ENCODE measurements at regions of chr14 and their contacts with region 1.

Region 1: DNA sequence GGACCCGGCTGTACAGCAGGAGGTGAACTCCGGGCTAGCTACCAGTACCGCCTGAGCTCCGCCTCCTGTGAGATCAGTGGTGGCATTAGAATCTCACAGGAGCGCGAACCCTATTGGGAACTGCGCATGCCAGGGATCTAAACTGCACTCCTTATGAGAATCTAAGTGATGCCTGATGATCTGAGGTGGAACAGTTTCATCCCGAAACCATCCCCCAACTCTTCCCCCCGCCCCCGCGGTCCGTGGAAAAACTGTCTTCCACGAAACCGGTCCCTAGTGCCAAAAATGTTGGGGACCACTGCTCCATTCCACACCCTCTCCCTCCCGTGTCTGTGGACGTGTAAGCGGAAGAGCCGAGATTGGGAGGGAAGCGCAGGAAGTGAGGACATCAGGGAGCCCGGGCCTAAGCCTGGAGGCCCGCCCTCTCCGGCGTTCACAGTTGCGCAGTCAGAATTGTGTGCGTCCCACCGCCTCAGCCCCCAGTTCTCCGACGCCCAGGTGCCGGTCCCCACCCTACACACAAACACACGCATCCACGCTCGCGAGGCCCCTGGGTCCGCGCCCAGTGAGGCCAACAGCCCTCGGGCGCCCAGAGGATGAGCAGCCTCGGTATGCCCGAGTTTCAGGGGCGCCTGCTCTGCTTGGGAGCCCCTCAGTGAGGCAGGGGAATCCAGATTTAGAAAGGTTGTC is 1.8 kb upstream of the RNASE4 start:
- DNase-seq: peak; percentile 81
- H3K4me3 Mint-ChIP-seq: no peak overlapping the region
- H3K27ac Mint-ChIP-seq: no peak overlapping the region
- H3K4me1 Mint-ChIP-seq: peaks cover 22% of the 10 kb centered on the region
- H3K27me3 Mint-ChIP-seq: no peaks in the 10 kb centered on the region

Region 2: DNA sequence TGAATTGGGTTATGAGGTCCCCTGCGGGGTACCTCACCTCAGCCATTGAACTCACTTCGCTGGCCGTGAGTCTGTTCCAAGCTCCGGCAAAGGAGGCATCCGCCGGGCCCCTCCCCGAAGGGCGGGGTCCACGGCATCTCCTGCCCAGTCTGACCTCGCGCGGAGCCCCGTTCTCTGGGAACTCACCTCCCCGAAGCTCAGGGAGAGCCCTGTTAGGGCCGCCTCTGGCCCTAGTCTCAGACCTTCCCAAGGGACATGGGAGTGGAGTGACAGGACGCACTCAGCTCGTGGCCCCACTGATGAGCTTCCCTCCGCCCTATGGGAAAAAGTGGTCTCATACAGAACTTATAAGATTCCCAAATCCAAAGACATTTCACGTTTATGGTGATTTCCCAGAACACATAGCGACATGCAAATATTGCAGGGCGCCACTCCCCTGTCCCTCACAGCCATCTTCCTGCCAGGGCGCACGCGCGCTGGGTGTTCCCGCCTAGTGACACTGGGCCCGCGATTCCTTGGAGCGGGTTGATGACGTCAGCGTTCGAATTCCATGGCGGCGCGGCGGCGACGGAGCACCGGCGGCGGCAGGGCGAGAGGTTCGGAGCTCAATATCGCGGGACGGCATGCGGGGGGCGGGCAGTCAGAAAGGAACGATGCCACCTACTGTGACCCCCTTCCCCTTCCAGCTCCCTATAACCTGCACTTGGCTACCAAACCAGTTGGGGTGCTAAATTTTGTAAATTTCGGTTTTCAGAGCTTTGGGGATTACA is 339.3 kb before region 1 on chr14 and contains the start of gene PARP2:
- CTCF ChIA-PET with region 1: interaction called, 3 read pairs
- intact Hi-C with region 1: loop called (anchors 1 kb)
- DNase-seq: peak; percentile 96
- H3K4me3 Mint-ChIP-seq: peak within 1 kb of the TSS; percentile 96
- H3K27ac Mint-ChIP-seq: peak within 1 kb of the TSS; percentile 95
- H3K4me1 Mint-ChIP-seq: peaks cover 19% of the 10 kb centered on the region
- H3K27me3 Mint-ChIP-seq: peaks cover 2% of the 10 kb centered on the region
- total RNA-seq, gene PARP2: 62.5 to 63.5 TPM

Region 3: GRCh38 chr14:20454516-20455354 is 227.8 kb before region 1 on chr14 and contains the starts of genes APEX1 and OSGEP:
- CTCF ChIA-PET with region 1: interaction called, 3 read pairs
- intact Hi-C with region 1: loop called (anchors 1 kb)
- DNase-seq: peak; percentile 99
- H3K4me3 Mint-ChIP-seq: peak within 1 kb of the TSS; percentile 52
- H3K27ac Mint-ChIP-seq: no peak within 1 kb of the TSS
- H3K4me1 Mint-ChIP-seq: peaks cover 31% of the 10 kb centered on the region
- H3K27me3 Mint-ChIP-seq: no peaks in the 10 kb centered on the region
- total RNA-seq, gene APEX1: 187 to 190 TPM
- total RNA-seq, gene OSGEP: 35.7 to 36.8 TPM

Region 4: GRCh38 chr14:20632682-20633428 is 49.7 kb before region 1 on chr14:
- CTCF ChIA-PET with region 1: interaction called, 9 read pairs
- intact Hi-C with region 1: loop called (anchors 1 kb)
- DNase-seq: peak; percentile 83
- H3K4me3 Mint-ChIP-seq: peak overlapping the region; percentile 79
- H3K27ac Mint-ChIP-seq: peak overlapping the region; percentile 89
- H3K4me1 Mint-ChIP-seq: peaks cover 35% of the 10 kb centered on the region
- H3K27me3 Mint-ChIP-seq: peaks cover 34% of the 10 kb centered on the region

Region 5: DNA sequence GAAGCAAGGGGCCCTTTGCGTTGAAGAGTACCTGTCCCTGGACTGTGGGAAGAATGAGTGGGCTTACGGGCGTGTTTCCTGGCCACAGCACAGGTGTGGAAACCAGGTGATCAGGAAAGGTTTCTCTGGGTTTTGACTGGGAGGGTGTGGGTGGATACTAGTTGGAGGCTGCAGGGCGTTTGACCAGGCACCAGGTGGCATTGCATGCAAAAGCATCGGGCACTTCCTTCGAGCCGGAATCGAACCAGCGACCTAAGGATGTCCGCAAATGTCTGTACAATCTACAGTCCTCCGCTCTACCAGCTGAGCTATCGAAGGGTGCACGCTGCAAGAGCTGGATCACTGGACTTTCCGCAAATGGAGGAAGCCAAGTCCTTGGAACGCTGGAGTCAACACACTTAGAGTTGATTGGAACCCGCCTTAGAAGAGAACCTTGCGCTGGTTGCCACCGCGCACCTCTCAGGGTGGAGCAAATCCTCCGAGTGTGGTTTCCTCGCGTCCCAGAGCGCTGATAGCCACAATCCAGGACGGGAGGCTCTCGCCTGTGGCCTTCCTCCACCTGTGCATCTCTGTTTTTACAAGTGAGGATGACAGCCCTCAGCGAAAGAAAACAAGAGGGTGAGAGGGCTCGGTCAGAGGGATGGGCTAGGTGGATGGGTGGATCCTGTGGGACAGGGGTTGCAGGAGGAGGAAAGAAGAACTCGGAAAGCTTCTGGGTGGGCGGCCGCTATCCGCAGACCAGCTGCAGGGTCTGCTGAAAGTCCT is 19.4 kb before region 1 on chr14:
- CTCF ChIA-PET with region 1: interaction called, 36 read pairs
- intact Hi-C with region 1: loop called (anchors 1 kb)
- DNase-seq: peak; percentile 94
- H3K4me3 Mint-ChIP-seq: peak overlapping the region; percentile 83
- H3K27ac Mint-ChIP-seq: peak overlapping the region; percentile 79
- H3K4me1 Mint-ChIP-seq: peaks cover 16% of the 10 kb centered on the region
- H3K27me3 Mint-ChIP-seq: peaks cover 8% of the 10 kb centered on the region

Region 6: GRCh38 chr14:21383848-21384493 is 701.4 kb after region 1 on chr14 and contains the start of gene SUPT16H:
- CTCF ChIA-PET with region 1: no interaction called
- intact Hi-C with region 1: loop called (anchors 5 kb)
- DNase-seq: peak; percentile 97
- H3K4me3 Mint-ChIP-seq: peak within 1 kb of the TSS; percentile 98
- H3K27ac Mint-ChIP-seq: peak within 1 kb of the TSS; percentile 99
- H3K4me1 Mint-ChIP-seq: peaks cover 34% of the 10 kb centered on the region
- H3K27me3 Mint-ChIP-seq: no peaks in the 10 kb centered on the region
- total RNA-seq, gene SUPT16H: 164 to 165 TPM